Prostate gland (tissue), 2 donors: ENCODE measurements at regions of chr4 and their contacts with region 1.

Region 1: DNA sequence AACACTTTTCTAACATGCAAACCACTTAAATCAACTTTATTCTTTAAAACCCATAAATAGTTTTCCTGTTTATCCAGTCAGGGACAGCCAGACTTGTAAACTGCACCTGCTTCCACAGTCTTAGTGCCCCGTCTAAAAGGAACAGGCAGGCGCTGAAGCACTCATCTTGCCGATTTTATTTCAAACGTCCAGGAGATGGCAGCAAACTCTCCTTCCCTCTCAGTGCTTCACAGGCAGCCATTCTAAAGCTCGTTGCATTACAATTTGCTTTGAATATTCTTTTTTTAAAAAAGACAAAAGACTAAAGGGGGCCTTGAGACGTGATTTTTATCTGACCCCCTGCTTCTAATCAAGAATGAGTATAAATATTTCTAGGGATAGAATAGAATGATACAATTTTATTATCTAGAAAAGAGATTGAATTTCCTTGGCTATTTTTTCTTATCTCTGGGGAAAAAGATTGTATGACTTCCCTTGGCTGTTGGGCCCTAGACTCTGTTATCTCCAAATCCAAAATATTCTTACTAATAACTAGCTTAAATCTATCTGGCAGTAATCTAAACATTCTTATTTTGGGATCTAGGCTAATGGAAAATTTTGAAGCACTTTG is 93.6 kb upstream of the MYOZ2 start:
- DNase-seq: peak; percentile 53
- H3K4me3 ChIP-seq: no peak overlapping the region
- H3K27ac ChIP-seq: peak overlapping the region; percentile 36 to 49
- H3K4me1 ChIP-seq: no peaks in the 10 kb centered on the region
- H3K27me3 ChIP-seq: no peaks in the 10 kb centered on the region
- CTCF ChIP-seq: peak; percentile 62 to 71 (median 66)
- POLR2A ChIP-seq: no peak

Region 2: GRCh38 chr4:118740869-118741268 is 301.2 kb before region 1 on chr4:
- intact Hi-C with region 1: loop called (anchors 10 kb)
- DNase-seq: no peak
- H3K4me3 ChIP-seq: no peak overlapping the region
- H3K27ac ChIP-seq: no peak overlapping the region
- H3K4me1 ChIP-seq: peaks cover 3% of the 10 kb centered on the region
- H3K27me3 ChIP-seq: no peaks in the 10 kb centered on the region
- CTCF ChIP-seq: peak in 3 of 4 experiments; percentile 54 to 66 (median 58)
- POLR2A ChIP-seq: no peak

Region 3: DNA sequence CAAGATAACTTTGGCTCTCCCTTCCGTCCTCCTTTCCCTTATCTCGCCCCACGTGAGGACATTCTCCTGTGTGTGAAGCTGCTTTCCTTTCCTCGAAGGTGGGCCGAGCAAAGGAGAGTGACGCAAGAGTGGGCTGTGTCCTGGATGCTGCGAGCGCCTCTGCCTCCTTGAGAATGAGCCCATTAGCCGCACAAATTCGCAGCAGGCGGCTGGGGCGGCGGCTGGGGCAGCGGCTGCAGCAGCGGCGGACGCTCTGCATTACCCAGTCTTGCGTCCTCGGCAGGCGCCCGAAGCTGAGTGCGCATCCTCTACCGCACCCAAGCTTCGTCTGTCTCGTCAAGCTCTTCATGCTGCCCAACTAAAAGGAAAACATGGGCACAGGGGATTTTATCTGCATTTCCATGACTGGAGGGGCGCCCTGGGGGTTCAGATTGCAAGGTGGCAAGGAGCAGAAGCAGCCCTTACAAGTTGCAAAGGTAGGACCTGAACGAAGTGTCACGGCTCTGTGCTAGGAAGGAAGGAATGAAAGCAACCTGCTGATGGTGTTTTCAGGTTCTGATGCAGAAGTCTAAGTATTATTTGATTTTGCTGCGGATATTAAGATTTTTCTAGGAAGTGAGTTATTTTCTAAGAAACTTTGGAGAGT is 153.3 kb before region 1 on chr4 and contains the start of gene SYNPO2:
- intact Hi-C with region 1: loop called (anchors 10 kb)
- DNase-seq: peak; percentile 79
- H3K4me3 ChIP-seq: peak within 1 kb of the TSS; percentile 26 to 37
- H3K27ac ChIP-seq: peak within 1 kb of the TSS; percentile 41 to 78
- H3K4me1 ChIP-seq: no peaks in the 10 kb centered on the region
- H3K27me3 ChIP-seq: no peaks in the 10 kb centered on the region
- CTCF ChIP-seq: peak in 1 of 4 experiments; percentile 1
- POLR2A ChIP-seq: peak; percentile 76
- total RNA-seq, gene SYNPO2: 131 to 181 TPM

Region 4: GRCh38 chr4:118918388-118918787 is 123.7 kb before region 1 on chr4:
- intact Hi-C with region 1: no loop called
- DNase-seq: no peak
- H3K4me3 ChIP-seq: no peak overlapping the region
- H3K27ac ChIP-seq: peak overlapping the region; percentile 42 to 43
- H3K4me1 ChIP-seq: no peaks in the 10 kb centered on the region
- H3K27me3 ChIP-seq: no peaks in the 10 kb centered on the region
- CTCF ChIP-seq: no peak
- POLR2A ChIP-seq: no peak

Region 5: GRCh38 chr4:118981839-118982381 is 60.1 kb before region 1 on chr4:
- intact Hi-C with region 1: loop called (anchors 5 kb)
- DNase-seq: peak; percentile 65
- H3K4me3 ChIP-seq: no peak overlapping the region
- H3K27ac ChIP-seq: peak overlapping the region; percentile 27 to 39
- H3K4me1 ChIP-seq: no peaks in the 10 kb centered on the region
- H3K27me3 ChIP-seq: no peaks in the 10 kb centered on the region
- CTCF ChIP-seq: peak; percentile 46 to 87 (median 68)
- POLR2A ChIP-seq: no peak

Region 6: GRCh38 chr4:119212234-119212963 is 170.3 kb after region 1 on chr4 and contains the start of gene USP53:
- intact Hi-C with region 1: loop called (anchors 5 kb)
- DNase-seq: peak; percentile 99
- H3K4me3 ChIP-seq: peak within 1 kb of the TSS; percentile 83 to 86
- H3K27ac ChIP-seq: peak within 1 kb of the TSS; percentile 97
- H3K4me1 ChIP-seq: no peaks in the 10 kb centered on the region
- H3K27me3 ChIP-seq: no peaks in the 10 kb centered on the region
- CTCF ChIP-seq: peak in 1 of 4 experiments; percentile 48
- POLR2A ChIP-seq: peak; percentile 98
- total RNA-seq, gene USP53: 33.9 to 41.8 TPM

Region 7: DNA sequence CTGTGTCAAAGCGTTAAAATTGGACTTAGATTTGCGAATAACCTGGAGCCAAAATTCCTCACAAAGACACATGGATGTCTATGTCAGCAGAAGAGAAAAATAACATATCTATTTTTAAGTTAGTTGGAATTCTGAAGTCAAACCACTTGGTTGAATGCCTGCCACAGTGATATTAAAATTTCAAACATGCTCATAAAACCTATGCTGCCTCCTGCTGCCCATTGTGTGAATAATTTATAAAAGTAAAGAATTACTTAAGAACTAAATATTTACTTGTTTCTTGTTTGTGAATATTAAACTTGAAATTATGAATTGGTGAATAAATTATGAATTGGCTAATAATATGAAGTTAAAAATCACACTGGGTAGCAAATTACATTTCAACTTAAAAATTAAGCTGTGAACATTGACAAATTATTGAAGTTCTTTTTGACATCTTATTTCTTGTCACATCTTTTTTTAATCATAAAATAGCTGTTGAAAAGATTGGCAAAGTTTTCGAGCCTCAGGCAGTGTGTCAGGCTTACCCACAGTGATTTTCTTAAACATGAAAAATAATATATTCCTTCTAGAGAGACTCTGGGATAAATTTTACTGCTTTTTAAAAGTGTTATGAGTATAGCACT is 244.4 kb after region 1 on chr4:
- intact Hi-C with region 1: loop called (anchors 5 kb)
- DNase-seq: peak; percentile 25
- H3K4me3 ChIP-seq: no peak overlapping the region
- H3K27ac ChIP-seq: no peak overlapping the region
- H3K4me1 ChIP-seq: no peaks in the 10 kb centered on the region
- H3K27me3 ChIP-seq: no peaks in the 10 kb centered on the region
- CTCF ChIP-seq: peak in 3 of 4 experiments; percentile 52 to 80 (median 68)
- POLR2A ChIP-seq: no peak

Region 8: GRCh38 chr4:119299741-119300100 is 257.7 kb after region 1 on chr4:
- intact Hi-C with region 1: loop called (anchors 5 kb)
- DNase-seq: no peak
- H3K4me3 ChIP-seq: peak overlapping the region; percentile 57 to 69
- H3K27ac ChIP-seq: peak overlapping the region; percentile 84 to 93
- H3K4me1 ChIP-seq: peaks cover 6% of the 10 kb centered on the region
- H3K27me3 ChIP-seq: no peaks in the 10 kb centered on the region
- CTCF ChIP-seq: no peak
- POLR2A ChIP-seq: no peak